ENCODE measurements at regions of chr11 and their contacts with region 1.

Region 1: DNA sequence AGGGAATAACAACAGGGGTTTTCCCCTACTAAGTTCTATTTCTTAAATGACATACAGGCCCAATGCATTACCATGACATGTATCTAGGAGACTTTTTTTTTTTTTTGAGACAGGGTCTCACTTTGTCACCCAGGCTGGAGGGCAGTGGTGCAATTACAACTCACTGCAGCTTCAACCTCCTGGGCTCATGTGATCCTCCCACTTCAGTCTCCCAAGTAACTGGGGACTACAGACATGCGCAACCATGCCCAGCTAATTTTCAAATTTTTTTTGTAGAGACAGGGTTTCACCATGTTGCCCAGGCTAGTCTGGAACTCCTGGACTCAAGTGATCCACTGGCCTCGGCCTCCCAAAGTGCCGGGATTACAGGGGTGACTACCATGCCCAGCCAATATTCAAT is 7.5 kb downstream of the CPSF7 start:
- DNase-seq: no peak
- H3K4me3 ChIP-seq: no peak overlapping the region
- H3K27ac ChIP-seq: no peak overlapping the region
- H3K4me1 ChIP-seq: no peaks in the 10 kb centered on the region
- H3K27me3 ChIP-seq: no peaks in the 10 kb centered on the region
- CTCF ChIP-seq: no peak

Region 2: DNA sequence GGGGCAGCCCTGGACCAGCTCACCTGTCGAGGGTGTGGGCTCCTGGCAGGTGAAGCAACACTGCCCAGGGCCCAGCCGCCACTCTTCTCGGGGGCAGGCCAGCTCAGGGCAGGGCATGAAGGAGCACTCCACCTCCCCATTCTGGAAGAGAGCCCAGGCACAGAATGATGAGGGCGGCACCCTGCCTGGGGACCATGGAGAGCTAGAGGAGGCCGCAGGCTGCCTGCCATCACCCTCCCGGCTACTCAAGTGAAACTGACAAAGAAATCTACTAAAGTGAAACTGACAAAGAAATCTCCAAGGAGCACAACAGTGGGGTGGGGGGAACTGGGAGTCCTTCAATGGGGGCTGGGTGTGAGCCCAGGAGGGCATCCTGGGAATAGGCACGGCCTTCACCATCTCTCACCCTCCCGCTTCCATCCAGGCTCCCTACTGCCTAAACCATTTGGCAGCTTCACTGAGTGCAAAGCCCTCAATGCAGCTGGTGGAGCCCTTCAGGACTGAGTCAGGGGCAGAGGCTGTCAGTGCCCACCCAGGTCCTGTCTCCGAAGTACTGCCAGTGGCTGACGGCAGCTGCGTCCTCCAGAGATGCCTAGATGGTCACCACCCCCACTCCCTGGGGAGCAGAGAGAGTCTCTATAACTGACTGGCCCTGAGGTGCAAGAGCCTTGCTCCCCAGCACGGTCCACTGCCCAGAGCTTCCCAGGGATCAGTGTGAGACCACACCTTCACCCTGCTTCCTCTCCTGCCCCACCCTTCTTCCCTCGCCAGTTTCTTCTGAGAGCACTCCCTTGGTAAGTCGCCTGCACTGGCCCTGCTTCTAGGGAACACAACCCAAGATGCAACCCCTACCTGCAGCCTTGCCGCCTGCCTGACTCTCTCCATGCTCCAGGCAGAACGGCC is 148.8 kb before region 1 on chr11:
- CTCF ChIA-PET with region 1: no interaction called
- POLR2A ChIA-PET with region 1: no interaction called
- intact Hi-C with region 1: loop called (anchors 2 kb)
- DNase-seq: peak in 1 of 2 experiments; percentile 69
- H3K4me3 ChIP-seq: no peak overlapping the region
- H3K27ac ChIP-seq: no peak overlapping the region
- H3K4me1 ChIP-seq: no peaks in the 10 kb centered on the region
- H3K27me3 ChIP-seq: peaks cover 37% of the 10 kb centered on the region
- CTCF ChIP-seq: no peak